MCF 10A (cell line): ENCODE measurements at regions of chr13 and their contacts with region 1.

Region 1: GRCh38 chr13:49585220-49586157 is at the start of gene RCBTB1:
- DNase-seq: peak; percentile 70
- H3K4me3 Mint-ChIP-seq: peak within 1 kb of the TSS; percentile 77
- H3K27ac Mint-ChIP-seq: peak within 1 kb of the TSS; percentile 83
- H3K4me1 Mint-ChIP-seq: peaks cover 31% of the 10 kb centered on the region
- H3K27me3 Mint-ChIP-seq: no peaks in the 10 kb centered on the region
- CTCF ChIP-seq: no peak
- total RNA-seq, gene RCBTB1: 16.8 and 17.9 TPM in 2 replicates

Region 2: GRCh38 chr13:49247643-49248621 is 337.6 kb before region 1 on chr13 and contains the start of gene CDADC1:
- CTCF ChIA-PET with region 1: no interaction called
- POLR2A ChIA-PET with region 1: interaction called, 10 read pairs
- intact Hi-C with region 1: no loop called
- DNase-seq: peak; percentile 95
- H3K4me3 Mint-ChIP-seq: peak within 1 kb of the TSS; percentile 96
- H3K27ac Mint-ChIP-seq: peak within 1 kb of the TSS; percentile 97
- H3K4me1 Mint-ChIP-seq: peaks cover 6% of the 10 kb centered on the region
- H3K27me3 Mint-ChIP-seq: no peaks in the 10 kb centered on the region
- CTCF ChIP-seq: no peak
- total RNA-seq, gene CDADC1: 8.0 and 9.4 TPM in 2 replicates

Region 3: DNA sequence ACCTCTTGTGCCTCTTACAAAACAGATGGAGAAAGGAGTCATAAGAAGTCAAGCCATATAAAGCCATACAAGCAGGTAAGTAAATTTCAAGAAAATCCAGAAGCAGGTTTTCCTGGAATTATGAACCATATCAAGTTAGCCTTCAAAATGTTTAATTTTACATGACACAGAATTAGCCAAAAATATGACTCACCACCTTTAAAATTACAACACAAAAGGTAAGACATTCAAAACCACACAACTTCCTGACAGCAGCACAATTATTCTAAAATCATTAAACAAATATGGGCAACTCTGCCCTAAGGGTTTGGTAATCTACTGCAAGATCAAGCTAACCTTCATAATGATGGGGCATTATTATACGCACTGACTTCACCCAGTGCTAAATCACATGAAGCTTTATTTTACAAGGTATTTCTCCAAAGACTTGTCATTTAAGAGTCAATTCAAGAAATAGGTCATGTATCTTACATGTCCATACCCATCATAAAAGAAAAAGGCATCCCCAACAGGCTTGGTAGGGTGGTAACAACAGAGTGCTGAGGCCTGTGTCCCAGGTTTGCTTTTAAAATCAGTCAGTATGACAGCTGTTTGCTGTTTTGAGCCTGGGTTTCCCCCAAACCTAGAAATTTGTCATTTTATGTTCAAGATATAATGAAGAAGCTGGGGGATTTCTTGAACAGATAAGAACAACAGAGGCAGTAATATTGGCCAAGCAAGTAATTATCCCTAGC is 15.4 kb before region 1 on chr13:
- CTCF ChIA-PET with region 1: interaction called, 5 read pairs
- POLR2A ChIA-PET with region 1: interaction called, 20 read pairs
- intact Hi-C with region 1: no loop called
- DNase-seq: peak; percentile 72
- H3K4me3 Mint-ChIP-seq: no peak overlapping the region
- H3K27ac Mint-ChIP-seq: peak overlapping the region; percentile 46
- H3K4me1 Mint-ChIP-seq: peaks cover 22% of the 10 kb centered on the region
- H3K27me3 Mint-ChIP-seq: no peaks in the 10 kb centered on the region
- CTCF ChIP-seq: no peak

Region 4: DNA sequence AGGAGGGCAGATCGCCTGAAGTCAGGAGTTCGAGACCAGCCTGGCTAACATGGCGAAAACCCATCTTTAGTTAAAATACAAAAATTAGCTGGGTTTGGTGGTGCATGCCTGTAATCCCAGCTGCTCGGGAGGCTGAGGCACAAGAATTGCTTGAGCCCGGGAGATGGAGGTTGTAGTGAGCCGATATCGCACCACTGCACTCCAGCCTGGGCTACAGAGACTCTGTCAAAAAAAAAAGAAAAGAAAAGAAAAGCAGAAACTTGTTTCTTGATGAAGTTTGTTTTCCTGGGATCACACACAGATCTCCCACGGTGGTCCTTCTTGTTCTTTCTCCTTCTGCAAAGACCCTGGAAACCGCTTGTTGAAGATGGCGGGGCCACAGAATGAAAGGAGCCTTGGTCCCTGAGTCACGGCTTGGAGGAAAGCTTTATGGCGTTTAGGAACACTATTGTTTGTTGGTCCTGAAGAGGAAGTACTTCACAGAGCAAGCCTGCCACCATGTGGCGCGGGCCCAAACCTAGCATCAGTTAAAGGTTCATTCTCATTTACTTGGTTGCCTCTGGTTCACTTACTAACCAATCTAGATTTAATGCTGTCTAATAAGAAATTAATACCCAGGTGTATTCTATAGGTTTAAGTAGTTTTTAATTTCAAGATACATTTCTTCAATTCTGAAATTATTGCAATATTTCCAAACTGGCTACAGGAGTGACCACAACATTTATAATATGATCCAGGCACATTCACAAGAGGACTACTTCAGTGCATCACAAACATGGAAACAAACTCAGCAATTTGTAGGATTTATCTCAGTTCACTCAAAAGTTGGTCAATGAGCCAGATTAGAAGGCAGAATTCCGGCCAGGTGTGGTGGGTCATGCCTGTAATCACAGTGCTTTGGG is 21.5 kb after region 1 on chr13:
- CTCF ChIA-PET with region 1: interaction called, 10 read pairs
- POLR2A ChIA-PET with region 1: interaction called, 12 read pairs
- intact Hi-C with region 1: no loop called
- DNase-seq: peak; percentile 87
- H3K4me3 Mint-ChIP-seq: peak overlapping the region; percentile 55
- H3K27ac Mint-ChIP-seq: no peak overlapping the region
- H3K4me1 Mint-ChIP-seq: no peaks in the 10 kb centered on the region
- H3K27me3 Mint-ChIP-seq: no peaks in the 10 kb centered on the region
- CTCF ChIP-seq: peak; percentile 74

Region 5: GRCh38 chr13:49641801-49642291 is 56.4 kb after region 1 on chr13:
- CTCF ChIA-PET with region 1: interaction called, 3 read pairs
- POLR2A ChIA-PET with region 1: interaction called, 13 read pairs
- intact Hi-C with region 1: no loop called
- DNase-seq: peak; percentile 93
- H3K4me3 Mint-ChIP-seq: peak overlapping the region; percentile 67
- H3K27ac Mint-ChIP-seq: peak overlapping the region; percentile 94
- H3K4me1 Mint-ChIP-seq: peaks cover 24% of the 10 kb centered on the region
- H3K27me3 Mint-ChIP-seq: no peaks in the 10 kb centered on the region
- CTCF ChIP-seq: no peak

Region 6: DNA sequence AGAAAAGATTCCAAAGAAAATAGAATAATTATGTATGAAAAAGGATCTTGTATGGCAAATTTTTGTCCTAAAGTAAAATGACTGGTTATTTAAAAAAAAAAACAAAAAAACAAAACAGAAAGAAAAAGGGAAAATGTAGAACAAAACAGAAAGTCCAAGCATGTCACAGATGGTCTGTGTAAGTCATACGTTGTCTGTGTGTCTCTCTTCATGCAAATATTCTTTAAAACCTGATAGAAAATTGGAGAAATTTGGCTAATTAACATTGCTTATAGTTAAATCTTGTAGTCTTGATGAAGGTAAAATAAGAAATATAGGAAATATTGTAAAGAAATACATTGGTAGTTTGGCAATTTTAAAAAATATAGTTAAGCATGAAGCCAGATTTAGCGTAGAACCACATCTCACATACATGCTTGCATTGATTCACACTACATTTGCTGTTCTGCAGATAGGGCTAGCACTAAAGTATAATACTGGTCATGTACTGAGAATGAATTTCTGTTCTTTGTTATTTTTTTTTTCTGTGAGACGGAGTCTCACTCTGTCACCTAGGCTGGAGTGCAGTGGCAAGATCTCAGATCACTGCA is 292.2 kb after region 1 on chr13:
- CTCF ChIA-PET with region 1: no interaction called
- POLR2A ChIA-PET with region 1: no interaction called
- intact Hi-C with region 1: no loop called
- DNase-seq: peak; percentile 47
- H3K4me3 Mint-ChIP-seq: no peak overlapping the region
- H3K27ac Mint-ChIP-seq: no peak overlapping the region
- H3K4me1 Mint-ChIP-seq: no peaks in the 10 kb centered on the region
- H3K27me3 Mint-ChIP-seq: no peaks in the 10 kb centered on the region
- CTCF ChIP-seq: no peak